Activated CD4-positive, alpha-beta T cell treated with anti-CD3 and anti-CD28 coated beads, Interleukin-2, amount 10 ng/mL, durations not matched to agents 7 days and 5 days (primary cell): ENCODE measurements at regions of chr11 and their contacts with region 1.

Region 1: GRCh38 chr11:36478700-36479329 is 31.3 kb downstream of the TRAF6 start:
- DNase-seq: peak; percentile 51
- H3K4me3 Mint-ChIP-seq: no peak overlapping the region
- H3K27ac Mint-ChIP-seq: no peak overlapping the region
- H3K4me1 Mint-ChIP-seq: peaks cover 7% of the 10 kb centered on the region
- H3K27me3 Mint-ChIP-seq: no peaks in the 10 kb centered on the region

Region 2: GRCh38 chr11:36492724-36493304 is 14.0 kb after region 1 on chr11:
- CTCF ChIA-PET with region 1: interaction called, 10 read pairs
- POLR2A ChIA-PET with region 1: no interaction called
- DNase-seq: peak; percentile 49
- H3K4me3 Mint-ChIP-seq: no peak overlapping the region
- H3K27ac Mint-ChIP-seq: no peak overlapping the region
- H3K4me1 Mint-ChIP-seq: peaks cover 23% of the 10 kb centered on the region
- H3K27me3 Mint-ChIP-seq: no peaks in the 10 kb centered on the region